Common myeloid progenitor, CD34-positive (primary cell): ENCODE measurements at regions of chr1 and their contacts with region 1.

Region 1: GRCh38 chr1:167401260-167401873 is 117.0 kb downstream of the CD247 start:
- DNase-seq: peak; percentile 51 to 73 (median 69)
- H3K4me3 ChIP-seq: no peak overlapping the region
- H3K27ac ChIP-seq: no peak overlapping the region
- H3K4me1 ChIP-seq: no peaks in the 10 kb centered on the region
- H3K27me3 ChIP-seq: no peaks in the 10 kb centered on the region

Region 2: GRCh38 chr1:167196166-167196565 is 205.2 kb before region 1 on chr1:
- CTCF ChIA-PET with region 1: no interaction called
- POLR2A ChIA-PET with region 1: no interaction called
- DNase-seq: peak in 2 of 3 donors; percentile 49 to 64
- H3K4me3 ChIP-seq: no peak overlapping the region
- H3K27ac ChIP-seq: no peak overlapping the region
- H3K4me1 ChIP-seq: peaks cover 3 to 10% (median 6%) of the 10 kb centered on the region in 4 experiments
- H3K27me3 ChIP-seq: no peaks in the 10 kb centered on the region

Region 3: DNA sequence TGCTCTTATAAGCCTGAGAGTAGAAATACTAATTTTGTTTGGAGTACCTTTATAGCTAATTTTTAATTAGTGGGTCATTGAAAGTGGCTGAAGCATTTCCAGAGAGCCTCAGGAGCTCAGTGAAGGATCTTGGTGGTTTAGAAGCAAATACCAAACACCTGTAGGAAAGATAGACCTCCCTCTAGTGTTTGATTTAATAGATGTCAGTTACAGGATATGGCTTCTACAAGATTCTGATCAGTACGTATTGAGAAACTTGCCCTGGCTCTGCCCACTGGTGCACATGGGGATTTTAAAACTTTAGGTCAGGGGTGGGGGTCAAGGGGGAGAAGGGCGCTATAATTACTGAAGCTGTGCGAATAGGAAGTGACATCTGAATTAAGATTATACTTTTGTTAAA is 58.5 kb before region 1 on chr1:
- CTCF ChIA-PET with region 1: no interaction called
- POLR2A ChIA-PET with region 1: no interaction called
- DNase-seq: peak; percentile 44 to 58 (median 49)
- H3K4me3 ChIP-seq: peak overlapping the region in 1 of 7 experiments; percentile 28
- H3K27ac ChIP-seq: no peak overlapping the region
- H3K4me1 ChIP-seq: peaks cover 0 to 13% (median 4%) of the 10 kb centered on the region in 4 experiments
- H3K27me3 ChIP-seq: no peaks in the 10 kb centered on the region

Region 4: GRCh38 chr1:167412072-167412471 is 10.7 kb after region 1 on chr1:
- CTCF ChIA-PET with region 1: interaction called, 14 read pairs
- POLR2A ChIA-PET with region 1: no interaction called
- DNase-seq: no peak
- H3K4me3 ChIP-seq: no peak overlapping the region
- H3K27ac ChIP-seq: no peak overlapping the region
- H3K4me1 ChIP-seq: no peaks in the 10 kb centered on the region
- H3K27me3 ChIP-seq: no peaks in the 10 kb centered on the region

Region 5: DNA sequence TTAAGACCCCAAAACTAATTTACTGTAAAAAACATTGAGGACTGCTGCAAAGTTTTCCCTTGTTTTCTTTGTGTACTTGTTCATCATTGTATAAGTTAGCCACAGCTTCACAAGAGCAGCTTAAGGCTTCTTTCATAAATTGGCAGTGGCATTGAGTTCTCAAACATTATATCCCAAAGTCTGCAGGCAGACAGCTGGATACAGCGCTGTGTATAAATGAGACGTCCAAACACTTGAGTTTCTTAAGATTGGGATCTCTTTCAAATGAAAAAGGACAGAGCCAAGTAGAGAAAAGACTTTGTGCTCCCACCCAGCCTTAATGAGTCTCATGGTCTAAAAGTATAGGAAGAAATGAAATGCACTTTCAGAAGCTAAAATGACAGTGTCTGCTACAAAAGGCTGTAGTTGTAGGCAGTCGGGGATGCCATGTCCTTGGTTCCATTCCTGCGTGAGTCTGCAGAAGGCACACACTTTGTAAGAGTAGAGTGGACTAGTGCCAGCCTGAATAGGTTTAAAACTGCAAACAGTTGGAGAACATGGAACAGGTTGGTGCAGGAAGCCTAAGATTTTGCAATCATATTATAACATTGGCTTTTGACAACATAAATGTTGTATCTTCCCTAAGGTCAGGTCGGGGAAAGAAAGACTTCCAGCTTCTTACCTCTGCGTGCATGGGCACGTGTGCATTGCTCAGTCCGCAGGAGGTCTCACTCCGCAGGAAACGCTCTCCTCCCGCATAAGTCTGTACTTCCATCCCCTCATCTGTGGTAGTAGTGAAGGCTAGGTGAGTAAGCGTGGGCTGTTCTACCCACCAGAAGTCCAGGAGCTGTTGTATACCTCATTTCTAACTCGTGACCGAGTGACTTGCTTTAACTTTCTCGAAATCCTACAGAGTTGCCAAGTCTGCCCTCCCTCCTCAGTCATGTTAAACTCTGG is 22.6 kb after region 1 on chr1:
- CTCF ChIA-PET with region 1: no interaction called
- POLR2A ChIA-PET with region 1: no interaction called
- DNase-seq: no peak
- H3K4me3 ChIP-seq: no peak overlapping the region
- H3K27ac ChIP-seq: no peak overlapping the region
- H3K4me1 ChIP-seq: peaks cover 0 to 4% (median 1%) of the 10 kb centered on the region in 4 experiments
- H3K27me3 ChIP-seq: no peaks in the 10 kb centered on the region

Region 6: DNA sequence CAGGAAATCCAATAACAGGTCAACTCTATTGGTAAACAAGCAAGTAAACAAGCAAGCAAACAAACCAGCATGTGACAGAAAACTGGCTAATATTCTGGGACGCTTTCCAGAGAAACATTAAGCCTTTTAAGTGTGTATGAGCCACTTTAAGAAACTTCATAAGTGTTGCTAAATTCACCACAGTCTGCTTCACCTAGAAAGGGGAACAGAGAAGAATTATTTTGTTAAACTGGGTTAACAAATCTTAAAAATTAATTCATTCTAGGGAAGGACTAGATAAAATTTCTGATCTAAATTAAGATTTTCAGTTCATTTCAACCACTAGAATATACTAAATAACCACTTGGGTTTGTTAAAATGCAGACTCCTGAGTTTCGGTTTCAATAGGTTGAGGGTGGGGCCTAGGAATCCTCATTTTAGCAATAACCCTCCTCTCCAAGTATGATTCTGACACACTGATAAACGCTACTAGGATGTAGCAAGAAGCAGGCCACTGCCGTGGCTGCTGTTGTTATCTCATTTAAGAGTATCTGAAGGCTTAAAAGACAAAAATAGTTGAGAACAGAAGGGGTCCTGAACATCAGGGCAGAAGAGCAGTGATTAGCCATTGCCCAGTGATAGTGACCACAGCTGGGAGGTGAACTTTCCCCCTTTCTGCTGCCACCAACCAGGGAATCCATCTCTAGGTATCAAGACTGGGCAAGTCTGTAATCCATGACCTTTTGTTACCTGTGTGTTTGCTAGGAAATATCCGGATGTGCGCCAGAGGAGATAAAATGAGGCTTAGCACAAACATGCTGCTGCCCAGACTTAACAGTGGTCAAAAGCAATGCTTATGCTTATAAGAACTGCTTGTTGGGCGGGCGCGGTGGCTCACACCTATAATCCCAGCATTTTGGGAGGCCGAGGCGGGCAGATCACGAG is 141.0 kb after region 1 on chr1:
- CTCF ChIA-PET with region 1: interaction called, 12 read pairs
- POLR2A ChIA-PET with region 1: no interaction called
- DNase-seq: no peak
- H3K4me3 ChIP-seq: no peak overlapping the region
- H3K27ac ChIP-seq: no peak overlapping the region
- H3K4me1 ChIP-seq: peaks cover 0 to 18% (median 8%) of the 10 kb centered on the region in 4 experiments
- H3K27me3 ChIP-seq: no peaks in the 10 kb centered on the region